MCF 10A (cell line): ENCODE measurements at regions of chr11 and their contacts with region 1.

Region 1: DNA sequence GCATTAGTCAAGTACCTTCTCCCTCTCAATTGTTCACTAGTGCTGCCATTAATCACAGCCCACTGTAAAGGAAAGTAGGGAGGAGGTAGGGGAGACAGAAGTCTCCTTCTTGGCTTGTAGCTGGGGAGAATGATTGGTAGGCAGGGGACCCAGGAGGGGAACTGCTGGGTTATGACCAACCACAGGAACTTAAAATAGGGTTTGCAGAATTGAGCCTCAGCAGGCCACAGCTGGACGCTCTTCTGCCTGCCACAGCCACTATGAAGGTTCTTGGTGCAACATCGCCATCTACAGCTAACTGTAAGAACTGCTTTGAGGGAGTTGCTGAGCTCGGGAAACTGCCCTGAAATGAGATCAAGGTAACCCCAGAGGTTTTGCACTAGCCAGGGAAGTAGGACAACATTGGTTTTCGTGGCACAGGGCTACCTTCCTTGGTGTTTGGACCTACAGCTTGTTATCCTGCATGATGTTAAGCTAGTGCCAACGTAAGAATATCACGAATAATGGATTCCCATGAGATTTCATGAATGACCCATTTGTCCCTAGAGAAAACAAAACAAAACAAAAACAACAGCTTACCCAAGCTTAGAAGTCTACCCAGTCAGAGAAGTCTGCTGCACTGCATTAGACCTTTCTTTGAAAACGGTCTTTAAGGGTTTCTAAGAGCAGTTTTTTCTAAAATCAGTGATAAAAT is 787.1 kb upstream of the API5 start:
- DNase-seq: peak; percentile 40
- H3K4me3 Mint-ChIP-seq: no peak overlapping the region
- H3K27ac Mint-ChIP-seq: no peak overlapping the region
- H3K4me1 Mint-ChIP-seq: peaks cover 6% of the 10 kb centered on the region
- H3K27me3 Mint-ChIP-seq: no peaks in the 10 kb centered on the region
- CTCF ChIP-seq: peak; percentile 83

Region 2: DNA sequence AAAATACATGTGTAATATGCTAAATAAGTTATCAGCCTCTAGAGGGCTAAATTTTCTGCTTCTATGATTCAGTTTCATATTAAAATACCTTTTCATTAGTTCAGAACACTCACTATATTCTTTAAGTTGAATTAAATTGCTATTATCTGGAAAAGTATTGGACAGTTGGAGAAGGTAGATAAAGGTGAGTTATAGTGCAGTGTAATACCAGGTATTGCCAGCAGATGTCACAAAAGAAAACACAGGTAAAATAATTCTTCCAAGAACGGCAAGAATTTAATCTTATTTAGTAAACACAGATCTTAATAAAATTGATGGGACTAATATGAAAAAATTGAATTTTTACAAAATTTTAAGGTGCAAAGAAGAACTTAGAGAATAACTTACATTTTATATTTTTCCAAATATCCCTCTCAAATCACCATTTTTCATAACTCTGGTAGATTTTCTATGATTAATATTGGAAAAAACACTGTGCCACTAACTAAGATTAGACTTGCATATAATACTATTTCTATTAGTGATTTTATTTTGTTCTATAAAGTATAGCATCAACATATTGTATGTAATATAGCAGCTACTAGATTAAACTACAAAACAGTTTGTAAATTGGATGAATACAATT is 1063.5 kb before region 1 on chr11:
- CTCF ChIA-PET with region 1: interaction called, 21 read pairs
- POLR2A ChIA-PET with region 1: interaction called, 5 read pairs
- intact Hi-C with region 1: loop called (anchors 1 kb)
- DNase-seq: peak; percentile 33
- H3K4me3 Mint-ChIP-seq: no peak overlapping the region
- H3K27ac Mint-ChIP-seq: no peak overlapping the region
- H3K4me1 Mint-ChIP-seq: peaks cover 11% of the 10 kb centered on the region
- H3K27me3 Mint-ChIP-seq: peaks cover 14% of the 10 kb centered on the region
- CTCF ChIP-seq: peak; percentile 67

Region 3: DNA sequence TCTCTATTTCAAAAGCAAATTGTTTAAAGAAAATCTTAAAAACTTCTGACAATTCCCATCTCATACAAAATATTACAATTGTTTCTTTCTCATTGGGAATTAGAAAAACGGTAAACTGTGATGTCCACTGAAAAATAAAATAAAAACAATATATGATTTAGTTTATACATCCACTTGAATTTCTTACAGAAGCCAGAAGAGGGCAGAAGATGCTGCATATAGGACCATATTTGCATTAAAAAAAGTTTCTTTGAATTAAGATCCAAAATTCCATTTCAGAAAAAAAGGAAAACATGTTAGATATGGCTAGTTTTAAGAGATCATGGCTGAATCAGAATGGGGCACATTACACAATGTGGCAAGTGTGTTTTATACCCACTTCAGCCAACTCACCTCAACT is 1026.0 kb before region 1 on chr11:
- CTCF ChIA-PET with region 1: interaction called, 13 read pairs
- POLR2A ChIA-PET with region 1: interaction called, 3 read pairs
- intact Hi-C with region 1: loop called (anchors 1 kb)
- DNase-seq: peak; percentile 5
- H3K4me3 Mint-ChIP-seq: no peak overlapping the region
- H3K27ac Mint-ChIP-seq: no peak overlapping the region
- H3K4me1 Mint-ChIP-seq: no peaks in the 10 kb centered on the region
- H3K27me3 Mint-ChIP-seq: no peaks in the 10 kb centered on the region
- CTCF ChIP-seq: peak; percentile 55

Region 4: GRCh38 chr11:41612415-41612814 is 912.3 kb before region 1 on chr11:
- CTCF ChIA-PET with region 1: interaction called, 6 read pairs
- POLR2A ChIA-PET with region 1: no interaction called
- intact Hi-C with region 1: loop called (anchors 2 kb)
- DNase-seq: peak; percentile 9
- H3K4me3 Mint-ChIP-seq: no peak overlapping the region
- H3K27ac Mint-ChIP-seq: no peak overlapping the region
- H3K4me1 Mint-ChIP-seq: peaks cover 11% of the 10 kb centered on the region
- H3K27me3 Mint-ChIP-seq: no peaks in the 10 kb centered on the region
- CTCF ChIP-seq: peak; percentile 34

Region 5: GRCh38 chr11:42536611-42537360 is 12.1 kb after region 1 on chr11:
- CTCF ChIA-PET with region 1: interaction called, 30 read pairs
- POLR2A ChIA-PET with region 1: no interaction called
- intact Hi-C with region 1: no loop called
- DNase-seq: no peak
- H3K4me3 Mint-ChIP-seq: no peak overlapping the region
- H3K27ac Mint-ChIP-seq: no peak overlapping the region
- H3K4me1 Mint-ChIP-seq: no peaks in the 10 kb centered on the region
- H3K27me3 Mint-ChIP-seq: no peaks in the 10 kb centered on the region
- CTCF ChIP-seq: no peak

Region 6: GRCh38 chr11:42661942-42662341 is 137.3 kb after region 1 on chr11:
- CTCF ChIA-PET with region 1: no interaction called
- POLR2A ChIA-PET with region 1: no interaction called
- intact Hi-C with region 1: no loop called
- DNase-seq: no peak
- H3K4me3 Mint-ChIP-seq: no peak overlapping the region
- H3K27ac Mint-ChIP-seq: no peak overlapping the region
- H3K4me1 Mint-ChIP-seq: peaks cover 14% of the 10 kb centered on the region
- H3K27me3 Mint-ChIP-seq: no peaks in the 10 kb centered on the region
- CTCF ChIP-seq: no peak

Region 7: DNA sequence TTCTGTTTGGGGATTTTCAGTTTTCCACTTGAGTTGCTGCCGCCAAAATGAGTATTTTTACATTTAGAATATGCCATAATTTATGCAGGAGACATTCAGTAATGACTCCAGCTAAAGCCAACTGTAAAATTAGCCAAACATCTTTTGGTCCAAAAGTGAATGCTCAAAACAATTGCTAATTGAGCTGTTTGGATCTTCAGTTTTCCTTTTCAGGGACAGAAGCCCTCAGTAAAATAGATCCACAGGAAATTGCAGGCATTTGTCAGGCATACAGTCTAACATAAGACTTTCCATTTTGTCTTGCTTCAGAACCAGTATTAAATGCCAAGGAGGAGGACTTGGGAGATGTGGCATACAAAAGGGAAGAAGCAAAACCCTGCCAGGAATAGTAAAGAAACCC is 262.3 kb after region 1 on chr11:
- CTCF ChIA-PET with region 1: no interaction called
- POLR2A ChIA-PET with region 1: no interaction called
- intact Hi-C with region 1: no loop called
- DNase-seq: no peak
- H3K4me3 Mint-ChIP-seq: no peak overlapping the region
- H3K27ac Mint-ChIP-seq: no peak overlapping the region
- H3K4me1 Mint-ChIP-seq: no peaks in the 10 kb centered on the region
- H3K27me3 Mint-ChIP-seq: no peaks in the 10 kb centered on the region
- CTCF ChIP-seq: no peak